A549 (cell line): ENCODE measurements at regions of chr1 and their contacts with region 1.

Region 1: DNA sequence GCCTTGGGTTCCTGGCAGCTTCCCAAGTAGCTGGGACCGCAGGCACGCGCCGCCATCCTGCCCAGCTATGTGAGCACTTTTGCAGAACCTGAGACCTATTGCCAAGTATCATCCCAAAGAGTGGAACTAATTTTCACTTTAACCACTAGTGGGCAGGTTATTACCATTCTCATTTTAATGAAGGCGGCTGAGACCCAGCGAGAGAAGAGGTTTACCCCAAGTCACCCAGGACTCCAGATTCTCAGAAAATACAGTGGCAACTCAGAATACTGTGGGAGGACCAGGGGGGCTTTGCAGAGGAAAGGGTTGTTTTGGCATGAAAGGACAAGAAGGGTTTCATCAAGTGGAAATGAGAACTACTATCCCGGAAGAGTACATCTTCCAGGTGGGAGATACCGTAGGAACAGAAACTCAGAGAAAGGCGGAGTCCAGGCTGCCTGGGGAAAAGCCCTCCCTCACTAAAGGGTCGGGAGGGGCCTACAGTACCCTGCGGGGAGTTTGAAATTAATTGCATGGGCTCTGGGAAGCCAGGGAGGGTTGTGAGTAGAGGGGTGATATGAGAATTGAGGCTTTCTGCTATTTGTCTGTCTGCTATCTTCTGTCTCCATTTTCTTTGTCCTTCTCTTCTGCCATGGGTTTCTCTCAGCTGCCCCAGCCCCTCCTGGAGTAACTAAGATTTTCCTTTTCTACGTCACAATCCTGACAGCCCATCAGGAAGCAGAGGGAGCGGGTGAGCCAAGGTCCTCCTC is 7.2 kb upstream of the SEMA4A start:
- DNase-seq: peak; percentile 76 to 85
- ATAC-seq: peak; percentile 35 to 39
- H3K4me3 ChIP-seq: no peak overlapping the region
- H3K27ac ChIP-seq: peak overlapping the region; percentile 34 to 72
- H3K4me1 ChIP-seq: peaks cover 20% of the 10 kb centered on the region
- CTCF ChIP-seq: peak; percentile 76
- EP300 ChIP-seq: no peak
- POLR2A ChIP-seq: no peak
- RAD21 ChIP-seq: peak; percentile 90 to 91

Region 2: DNA sequence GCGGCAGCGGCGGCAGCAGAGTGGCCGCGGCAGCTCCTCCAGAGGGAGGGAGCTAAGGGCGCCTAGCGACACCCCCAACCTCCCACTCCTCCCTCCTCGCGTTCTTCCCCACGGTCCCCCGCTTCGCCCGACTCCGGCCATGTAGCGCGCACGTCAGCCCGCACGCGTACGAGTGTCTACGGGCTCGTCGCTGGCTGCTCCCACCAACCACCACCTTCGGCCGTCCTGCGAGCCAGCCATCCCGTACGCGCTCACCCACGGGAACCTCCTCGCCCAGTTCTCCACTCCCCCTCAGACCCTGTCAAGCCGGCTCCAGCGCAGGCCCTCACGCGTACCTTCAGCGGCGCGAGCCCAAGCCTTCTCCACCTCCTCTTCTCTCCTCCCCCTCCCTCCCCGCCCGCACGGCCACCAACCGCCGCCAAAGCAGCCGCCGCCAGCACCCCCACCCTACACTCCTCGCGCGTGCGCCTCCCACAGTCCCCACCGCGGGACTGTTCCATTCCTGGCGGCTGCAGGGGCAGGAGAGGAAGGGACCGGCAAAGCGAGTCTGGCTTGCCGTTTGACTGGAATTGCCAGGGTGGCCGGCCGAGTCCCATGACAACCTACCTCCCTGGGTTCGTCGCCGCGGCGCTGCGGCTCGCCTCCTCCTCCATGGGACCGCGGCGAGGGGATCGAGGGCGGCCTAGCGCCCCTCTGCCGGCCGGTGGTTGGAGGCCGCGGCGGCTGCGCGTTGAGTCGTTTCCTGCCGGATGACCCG is 457.7 kb before region 1 on chr1 and contains the start of gene YY1AP1:
- CTCF ChIA-PET with region 1: no interaction called
- POLR2A ChIA-PET with region 1: no interaction called
- DNase-seq: peak; percentile 90 to 91
- ATAC-seq: peak; percentile 91 to 93
- H3K4me3 ChIP-seq: peak within 1 kb of the TSS; percentile 74
- H3K27ac ChIP-seq: peak within 1 kb of the TSS; percentile 93 to 100
- H3K4me1 ChIP-seq: peaks cover 20% of the 10 kb centered on the region; the same call in 2 of the 3 replicates
- CTCF ChIP-seq: no peak
- EP300 ChIP-seq: no peak; a peak in 1 of 5 replicates
- POLR2A ChIP-seq: peak; percentile 43
- RAD21 ChIP-seq: no peak
- polyA plus RNA-seq, gene YY1AP1: 83.5 and 91.5 TPM in 2 replicates

Region 3: DNA sequence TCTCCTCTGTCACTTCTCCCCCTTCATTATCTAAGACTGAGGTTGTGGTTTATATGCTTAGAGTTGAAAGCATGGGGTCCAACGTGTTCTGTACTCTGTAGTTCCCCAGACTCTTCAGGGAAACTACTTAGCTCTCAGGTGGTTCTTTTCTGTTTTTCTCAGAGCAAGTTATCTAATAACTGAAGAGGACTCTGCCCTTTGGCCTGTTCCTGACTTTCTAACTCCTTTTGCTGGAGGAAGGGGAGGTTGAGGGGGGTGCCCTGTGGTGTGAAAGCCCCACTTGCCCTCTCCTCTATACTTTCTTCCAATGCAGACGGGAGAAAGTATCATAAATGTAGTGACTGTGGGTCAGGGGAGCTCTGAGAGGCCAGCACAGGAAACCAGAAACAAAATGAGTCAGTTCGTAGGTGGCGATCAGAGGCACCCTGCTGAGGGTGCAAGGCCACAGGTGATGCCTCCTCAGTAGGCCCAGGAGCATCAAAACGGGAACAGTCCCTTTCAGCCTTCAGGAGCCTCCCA is 52.7 kb after region 1 on chr1:
- CTCF ChIA-PET with region 1: interaction called, 13 read pairs
- POLR2A ChIA-PET with region 1: no interaction called
- DNase-seq: no peak
- ATAC-seq: no peak
- H3K4me3 ChIP-seq: no peak overlapping the region
- H3K27ac ChIP-seq: no peak overlapping the region
- H3K4me1 ChIP-seq: peaks cover 10% of the 10 kb centered on the region
- CTCF ChIP-seq: no peak
- EP300 ChIP-seq: no peak
- POLR2A ChIP-seq: no peak
- RAD21 ChIP-seq: no peak